ENCODE measurements at regions of chr3 and their contacts with region 1.

Region 1: DNA sequence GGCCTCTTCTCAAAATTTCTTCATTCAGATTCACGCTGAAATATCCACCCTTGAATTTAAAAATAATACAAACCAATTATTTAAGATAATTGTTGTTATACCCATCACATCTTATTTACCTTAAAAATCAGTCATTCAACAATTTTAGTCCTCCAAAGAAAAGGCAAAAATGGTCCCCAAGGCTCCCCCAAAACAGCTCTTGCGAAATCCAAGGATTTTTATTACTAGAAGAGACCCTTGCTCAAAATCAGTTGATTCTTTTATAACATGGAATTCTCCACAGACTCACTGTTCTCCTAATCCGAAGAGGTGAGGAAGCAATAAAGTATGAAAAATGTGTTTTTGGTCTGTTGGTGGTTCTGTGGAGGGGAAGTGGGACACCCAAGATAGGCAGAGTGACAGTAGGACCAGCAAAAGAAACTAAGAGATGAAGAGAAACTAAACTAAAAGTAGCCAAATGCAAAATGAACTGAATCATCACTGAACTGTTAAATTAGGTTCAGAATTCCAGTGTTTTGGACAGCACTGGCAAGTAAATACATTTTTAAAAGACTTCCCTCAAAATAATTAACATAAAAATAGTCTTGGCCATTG is 19.1 kb upstream of the PLCH1 start:
- DNase-seq: no peak

Region 2: DNA sequence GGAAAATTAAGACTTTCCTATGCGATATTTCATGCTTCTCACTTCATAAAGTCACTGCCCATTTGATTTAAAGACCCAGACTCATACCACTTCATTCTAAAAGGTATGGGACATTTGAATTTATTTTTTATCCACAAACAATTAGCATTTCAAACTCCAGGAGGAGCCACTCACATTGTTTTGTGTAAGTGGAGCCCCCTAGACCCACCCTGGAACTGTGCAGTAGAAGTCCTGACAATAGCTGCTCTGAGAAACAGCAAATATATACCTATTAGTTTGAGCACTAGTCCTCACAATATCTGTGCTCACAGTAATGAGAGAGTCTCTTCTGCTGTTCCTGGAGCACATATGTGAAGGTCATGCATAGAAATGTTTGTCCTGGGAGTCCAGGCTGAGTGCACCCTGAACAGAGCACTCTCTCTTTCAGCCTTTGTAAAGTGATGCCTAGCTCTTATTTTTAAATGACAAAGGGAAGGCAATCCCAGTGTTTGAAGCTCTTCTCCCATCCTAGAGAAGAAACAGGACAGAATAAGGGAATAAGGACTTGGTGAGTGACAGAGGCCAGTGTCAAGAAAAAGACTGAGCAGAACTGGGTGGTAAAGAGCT is 343.0 kb before region 1 on chr3:
- intact Hi-C with region 1: no loop called
- DNase-seq: no peak

Region 3: DNA sequence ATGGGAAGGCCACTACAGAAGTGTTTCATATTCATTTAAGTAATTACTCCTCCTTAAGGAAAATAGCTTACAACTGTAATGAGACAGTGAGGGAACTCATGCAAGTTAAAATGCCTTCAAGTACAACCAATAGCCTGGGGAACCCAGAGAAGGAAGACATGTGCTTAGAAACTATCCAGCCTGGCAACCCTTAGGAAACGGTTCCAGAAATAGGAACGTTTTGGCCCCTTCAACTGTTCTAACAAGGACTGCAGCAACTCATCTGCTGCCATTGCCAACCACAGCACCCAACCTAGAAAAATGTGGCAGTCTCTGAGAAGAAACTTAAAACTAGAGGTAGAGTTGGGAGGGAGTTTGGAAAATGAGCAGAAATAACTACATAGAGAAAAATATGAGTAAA is 322.9 kb before region 1 on chr3:
- intact Hi-C with region 1: no loop called
- DNase-seq: no peak

Region 4: GRCh38 chr3:156388497-156389448 is 624.8 kb after region 1 on chr3:
- intact Hi-C with region 1: loop called in 1 of 2 experiments (anchors 5 kb)
- DNase-seq: no peak